ENCODE measurements at regions of chr6 and their contacts with region 1.

Region 1: GRCh38 chr6:30013291-30013922 is 47.7 kb upstream of the POLR1H start:
- DNase-seq: no peak
- H3K4me3 ChIP-seq: no peak overlapping the region
- H3K27ac ChIP-seq: no peak overlapping the region
- H3K4me1 ChIP-seq: no peaks in the 10 kb centered on the region
- H3K27me3 ChIP-seq: peaks cover 1% of the 10 kb centered on the region
- CTCF ChIP-seq: peak; percentile 65 to 90 (median 86)

Region 2: GRCh38 chr6:29709183-29709582 is 304.2 kb before region 1 on chr6:
- dilution Hi-C with region 1: no loop called
- DNase-seq: no peak
- H3K4me3 ChIP-seq: no peak overlapping the region
- H3K27ac ChIP-seq: no peak overlapping the region
- H3K4me1 ChIP-seq: no peaks in the 10 kb centered on the region
- H3K27me3 ChIP-seq: peaks cover 21% of the 10 kb centered on the region
- CTCF ChIP-seq: no peak

Region 3: DNA sequence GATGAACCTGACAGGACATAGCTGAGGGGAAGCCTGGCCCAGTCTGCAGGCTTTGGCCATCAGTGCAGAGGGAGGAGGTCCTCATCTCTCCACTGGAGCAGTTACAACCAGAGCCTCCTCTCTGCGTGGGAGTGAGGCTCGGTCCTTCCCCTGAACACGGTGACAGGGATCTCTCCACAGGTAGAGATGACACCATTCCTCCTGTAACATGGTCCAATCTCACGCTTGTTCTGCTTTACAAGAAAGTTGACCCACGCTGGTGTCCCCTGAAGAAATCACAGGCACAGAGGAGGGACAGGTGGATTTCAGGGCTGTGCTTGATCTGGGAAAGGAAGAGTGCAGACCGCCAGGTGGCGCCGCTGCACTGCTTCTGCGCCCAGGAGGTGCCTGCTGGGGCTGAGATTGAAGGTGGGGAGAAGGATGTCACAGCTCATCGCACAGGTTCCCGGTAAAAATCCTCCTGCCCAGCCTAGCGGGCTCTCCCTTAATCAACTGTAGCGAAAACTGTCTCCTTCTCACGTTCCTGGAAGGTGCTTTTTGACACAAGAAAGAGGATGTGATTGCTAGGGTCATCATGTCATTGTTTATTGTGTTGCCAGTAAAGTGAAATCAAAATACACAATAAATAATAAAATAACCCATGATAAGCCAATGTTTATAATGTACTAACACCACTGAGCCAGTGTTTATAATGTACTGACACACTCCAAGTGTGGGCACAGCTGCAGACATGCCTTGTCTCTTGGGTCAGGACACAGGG is 165.4 kb before region 1 on chr6:
- dilution Hi-C with region 1: loop called (anchors 10 kb)
- DNase-seq: peak; percentile 36
- H3K4me3 ChIP-seq: no peak overlapping the region
- H3K27ac ChIP-seq: no peak overlapping the region
- H3K4me1 ChIP-seq: peaks cover 4% of the 10 kb centered on the region
- H3K27me3 ChIP-seq: peaks cover 31% of the 10 kb centered on the region
- CTCF ChIP-seq: peak; percentile 93 to 99 (median 96)

Region 4: GRCh38 chr6:29941016-29941415 is 72.4 kb before region 1 on chr6:
- dilution Hi-C with region 1: no loop called
- DNase-seq: no peak
- H3K4me3 ChIP-seq: no peak overlapping the region
- H3K27ac ChIP-seq: no peak overlapping the region
- H3K4me1 ChIP-seq: peaks cover 7% of the 10 kb centered on the region
- H3K27me3 ChIP-seq: no peaks in the 10 kb centered on the region
- CTCF ChIP-seq: no peak